GM10248 (cell line): ENCODE measurements at regions of chr2 and their contacts with region 1.

Region 1: DNA sequence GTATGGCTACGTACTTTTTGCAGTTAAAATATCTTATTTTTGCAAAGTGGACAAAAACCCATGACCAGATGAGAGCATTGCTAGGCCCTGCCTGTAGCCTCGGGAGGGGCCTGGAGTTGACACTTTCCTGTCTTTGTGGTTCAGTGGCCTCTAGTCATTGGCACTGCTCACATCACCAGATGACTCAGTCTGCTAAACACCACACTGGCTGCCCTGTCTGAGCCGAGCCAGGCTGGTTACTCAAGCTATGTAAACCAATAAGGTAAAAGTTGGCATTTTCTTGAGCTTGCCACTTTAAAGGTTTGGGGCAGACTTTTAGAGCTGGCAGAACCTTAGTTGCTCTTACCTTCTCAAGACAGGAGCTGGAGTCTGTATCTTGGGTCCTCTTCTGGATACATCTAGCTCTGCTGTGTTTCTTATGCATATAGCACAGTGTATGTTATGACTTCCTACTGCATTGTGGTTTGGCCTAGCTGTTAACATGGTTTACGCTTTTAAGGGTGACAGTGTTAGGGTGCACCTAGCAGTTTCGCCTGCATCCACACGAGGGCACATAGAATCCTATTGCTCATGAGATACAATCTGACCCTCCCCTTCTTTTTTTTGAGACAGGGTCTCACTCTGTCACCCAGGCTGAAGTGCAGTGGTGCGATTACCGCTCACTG is 76.4 kb downstream of the AP1S3 start:
- DNase-seq: peak; percentile 22
- CTCF ChIP-seq: peak; percentile 22

Region 2: GRCh38 chr2:223774193-223774592 is 13.2 kb after region 1 on chr2:
- CTCF ChIA-PET with region 1: interaction called, 12 read pairs
- POLR2A ChIA-PET with region 1: no interaction called
- DNase-seq: no peak
- CTCF ChIP-seq: no peak

Region 3: DNA sequence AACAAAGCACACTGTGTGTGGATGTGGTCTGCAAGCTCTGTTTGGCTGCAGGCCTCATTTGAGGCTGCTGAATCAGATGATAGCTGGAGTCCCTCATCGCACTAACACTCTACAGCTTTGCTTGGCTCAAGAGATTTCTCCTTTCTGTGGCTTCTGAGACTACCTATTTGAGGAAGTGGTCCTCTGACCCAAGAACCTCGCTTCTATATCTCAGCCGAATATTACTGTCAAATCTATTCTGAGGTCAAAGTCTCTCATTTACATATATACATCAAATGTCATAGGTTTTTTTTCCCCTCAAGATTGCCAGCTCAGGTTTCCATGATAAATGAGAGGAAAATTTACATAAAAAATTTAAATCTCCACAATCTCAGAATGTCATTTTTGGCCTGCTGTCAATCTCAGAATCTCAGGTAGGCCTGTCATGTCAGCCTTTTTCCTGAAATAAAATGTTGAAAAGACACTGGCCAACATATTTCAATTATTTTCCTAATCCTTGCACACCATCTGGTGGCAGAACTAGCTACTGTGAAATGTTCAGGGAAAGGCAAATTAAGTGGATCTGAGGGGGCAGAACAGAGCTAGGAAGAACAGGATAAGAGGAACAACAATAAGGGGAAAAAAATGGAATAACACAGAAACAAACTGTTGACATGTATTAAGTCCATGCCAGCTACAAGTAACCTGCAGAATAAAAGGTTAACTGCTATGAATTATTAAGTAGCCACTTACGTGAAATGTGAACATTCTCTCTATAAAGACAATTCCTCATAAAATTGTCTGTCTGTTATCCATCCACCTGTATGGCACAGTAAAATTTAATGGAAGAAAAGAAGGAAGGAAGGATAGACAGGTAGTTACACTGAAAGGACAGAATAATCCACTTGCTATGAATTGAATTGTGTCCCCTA is 37.1 kb after region 1 on chr2:
- CTCF ChIA-PET with region 1: interaction called, 14 read pairs
- POLR2A ChIA-PET with region 1: interaction called, 8 read pairs
- DNase-seq: peak; percentile 74
- CTCF ChIP-seq: peak; percentile 45